Activated naive CD4-positive, alpha-beta T cell treated with anti-CD3 and anti-CD28 coated beads for 36 hours (primary cell): ENCODE measurements at regions of chr1 and their contacts with region 1.

Region 1: DNA sequence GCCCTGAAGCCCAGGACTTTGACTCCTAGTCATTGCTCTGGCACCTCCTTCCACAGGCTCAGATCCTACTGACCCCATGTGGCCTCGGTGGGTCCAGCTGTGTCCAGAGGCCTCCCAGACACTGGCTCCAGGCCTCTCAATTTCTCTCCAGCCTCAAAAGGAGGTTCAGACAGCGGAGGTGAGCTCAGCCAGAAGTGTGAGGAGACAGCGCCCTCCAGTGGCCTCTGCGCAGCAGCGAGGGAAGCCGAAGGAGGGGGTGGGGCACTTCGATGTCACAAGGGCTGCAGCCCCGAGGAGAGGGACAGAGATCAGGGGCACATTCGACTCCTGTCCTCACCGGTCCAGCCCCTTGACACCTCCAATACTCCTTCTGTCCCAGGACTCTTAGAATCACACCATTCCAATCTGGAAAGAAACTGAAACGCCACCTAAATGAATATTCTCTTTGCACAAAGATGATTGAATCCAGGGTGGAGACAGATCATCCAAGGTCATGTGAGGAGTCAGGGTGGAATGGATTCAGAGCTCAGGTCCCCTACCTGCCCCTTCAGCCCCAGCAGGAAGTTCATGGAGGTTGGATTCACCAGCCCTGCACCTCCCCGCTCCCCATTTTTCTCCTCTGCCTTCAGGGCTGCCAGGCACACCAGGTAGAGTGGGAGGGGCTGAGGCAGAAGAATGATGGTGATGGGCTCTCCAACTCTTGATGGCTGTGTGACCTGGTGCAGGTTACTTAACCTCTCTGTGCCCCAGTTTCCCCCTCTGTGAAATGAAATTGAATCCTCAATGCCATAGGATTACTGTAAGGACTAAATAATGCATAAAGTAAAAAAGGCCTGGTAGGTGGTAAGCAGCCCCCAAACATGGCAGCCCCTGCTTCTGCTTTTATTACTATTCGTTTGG is 34.8 kb upstream of the ZBTB40 start:
- DNase-seq: peak; percentile 87
- H3K4me3 Mint-ChIP-seq: no peak overlapping the region
- H3K27ac Mint-ChIP-seq: no peak overlapping the region
- H3K4me1 Mint-ChIP-seq: no peaks in the 10 kb centered on the region
- H3K27me3 Mint-ChIP-seq: peaks cover 34% of the 10 kb centered on the region

Region 2: GRCh38 chr1:22105611-22106207 is 311.1 kb before region 1 on chr1:
- CTCF ChIA-PET with region 1: no interaction called
- intact Hi-C with region 1: loop called (anchors 1 kb)
- DNase-seq: peak; percentile 50
- H3K4me3 Mint-ChIP-seq: no peak overlapping the region
- H3K27ac Mint-ChIP-seq: peak overlapping the region; percentile 74
- H3K4me1 Mint-ChIP-seq: peaks cover 53% of the 10 kb centered on the region
- H3K27me3 Mint-ChIP-seq: no peaks in the 10 kb centered on the region

Region 3: GRCh38 chr1:22131875-22132486 is 284.8 kb before region 1 on chr1:
- CTCF ChIA-PET with region 1: interaction called, 17 read pairs
- intact Hi-C with region 1: loop called (anchors 1 kb)
- DNase-seq: peak; percentile 69
- H3K4me3 Mint-ChIP-seq: no peak overlapping the region
- H3K27ac Mint-ChIP-seq: no peak overlapping the region
- H3K4me1 Mint-ChIP-seq: no peaks in the 10 kb centered on the region
- H3K27me3 Mint-ChIP-seq: peaks cover 2% of the 10 kb centered on the region

Region 4: DNA sequence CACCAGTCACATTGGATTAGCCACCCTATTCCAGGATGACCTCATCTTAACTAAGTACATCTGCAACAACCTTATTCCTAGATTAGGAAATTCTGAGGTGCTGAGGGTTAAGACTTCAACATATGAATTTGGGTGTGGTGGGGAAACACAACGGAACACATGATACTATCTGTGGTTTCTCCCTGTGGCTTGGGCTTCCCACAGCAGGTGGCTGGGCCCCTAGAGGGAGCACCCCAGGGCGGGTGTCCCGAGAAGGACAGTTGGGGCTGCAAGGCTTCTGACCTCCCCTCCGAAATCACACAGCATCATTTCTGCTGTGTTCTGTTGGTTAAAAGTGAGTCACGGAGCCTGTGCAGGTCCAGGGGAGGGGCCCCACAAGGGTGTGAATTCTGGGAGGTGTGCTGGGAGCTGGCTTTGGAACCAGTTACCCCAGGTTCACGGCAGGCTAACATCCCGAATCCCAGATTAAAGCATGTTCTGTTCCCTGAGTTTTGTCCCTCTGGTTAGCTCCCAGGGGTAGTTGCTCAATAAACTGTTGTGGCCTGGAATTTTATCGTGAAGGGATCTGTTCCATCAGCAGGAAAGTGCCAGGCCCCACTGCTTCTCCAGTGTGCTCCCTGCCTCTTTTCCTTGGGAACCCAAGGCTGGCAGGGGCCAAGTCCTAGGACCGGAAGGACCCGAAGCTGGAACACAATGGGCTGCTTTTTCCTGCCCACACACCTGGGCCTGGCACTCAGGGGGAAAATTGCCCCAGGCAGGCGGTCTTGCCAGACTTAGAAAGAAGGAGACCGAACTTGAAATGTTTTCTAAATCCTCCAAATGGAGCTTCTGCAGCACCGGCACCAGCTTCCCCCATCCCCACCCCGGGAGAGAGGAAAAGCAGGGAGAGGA is 119.9 kb before region 1 on chr1:
- CTCF ChIA-PET with region 1: interaction called, 3 read pairs
- intact Hi-C with region 1: loop called (anchors 10 kb)
- DNase-seq: no peak
- H3K4me3 Mint-ChIP-seq: no peak overlapping the region
- H3K27ac Mint-ChIP-seq: no peak overlapping the region
- H3K4me1 Mint-ChIP-seq: no peaks in the 10 kb centered on the region
- H3K27me3 Mint-ChIP-seq: peaks cover 38% of the 10 kb centered on the region

Region 5: GRCh38 chr1:22641906-22642636 is 225.3 kb after region 1 on chr1:
- CTCF ChIA-PET with region 1: interaction called, 15 read pairs
- intact Hi-C with region 1: loop called (anchors 1 kb)
- DNase-seq: peak; percentile 78
- H3K4me3 Mint-ChIP-seq: no peak overlapping the region
- H3K27ac Mint-ChIP-seq: no peak overlapping the region
- H3K4me1 Mint-ChIP-seq: no peaks in the 10 kb centered on the region
- H3K27me3 Mint-ChIP-seq: peaks cover 5% of the 10 kb centered on the region

Region 6: DNA sequence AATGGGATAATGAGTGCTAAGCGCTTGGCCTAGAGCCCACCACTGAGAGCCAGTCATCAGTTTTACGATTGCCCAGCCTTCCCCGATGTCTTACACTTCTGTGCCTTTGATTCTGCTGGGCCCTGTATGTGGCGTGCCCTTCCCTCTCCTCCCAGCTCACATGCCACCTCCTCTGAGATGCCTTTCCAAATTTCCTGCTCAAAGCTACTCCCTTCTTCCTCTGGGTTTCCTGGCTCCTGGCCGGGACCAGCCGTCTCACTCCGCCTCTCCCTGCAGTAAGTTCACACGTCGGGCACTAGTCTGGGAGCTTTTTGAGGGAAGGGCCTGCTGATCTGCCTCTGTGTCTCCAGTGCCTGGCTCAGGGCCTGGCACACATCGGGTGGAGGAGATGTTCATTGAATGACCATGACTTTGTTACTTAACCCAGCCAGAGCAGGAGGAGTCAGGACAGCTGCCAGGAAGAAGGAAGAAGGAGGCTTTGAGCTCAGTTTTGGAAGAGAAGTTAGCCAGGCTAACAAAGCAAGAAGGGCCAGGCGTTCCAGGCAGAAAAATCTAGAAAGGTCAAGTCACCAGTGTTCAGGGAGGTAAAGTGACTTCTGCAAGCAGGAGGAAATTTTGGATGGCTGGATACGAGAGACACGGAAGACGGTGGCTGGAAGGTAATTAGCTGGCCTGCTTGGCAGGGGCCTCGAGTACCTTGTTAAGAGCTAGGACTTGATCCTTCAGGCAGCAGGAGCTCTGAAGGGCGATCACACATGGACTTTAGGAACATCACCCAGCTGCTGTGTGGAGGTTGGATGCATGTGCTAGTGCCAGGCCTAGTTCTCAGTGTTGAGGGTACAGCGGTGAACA is 357.4 kb after region 1 on chr1:
- CTCF ChIA-PET with region 1: no interaction called
- intact Hi-C with region 1: no loop called
- DNase-seq: no peak
- H3K4me3 Mint-ChIP-seq: no peak overlapping the region
- H3K27ac Mint-ChIP-seq: no peak overlapping the region
- H3K4me1 Mint-ChIP-seq: no peaks in the 10 kb centered on the region
- H3K27me3 Mint-ChIP-seq: peaks cover 7% of the 10 kb centered on the region

Region 7: DNA sequence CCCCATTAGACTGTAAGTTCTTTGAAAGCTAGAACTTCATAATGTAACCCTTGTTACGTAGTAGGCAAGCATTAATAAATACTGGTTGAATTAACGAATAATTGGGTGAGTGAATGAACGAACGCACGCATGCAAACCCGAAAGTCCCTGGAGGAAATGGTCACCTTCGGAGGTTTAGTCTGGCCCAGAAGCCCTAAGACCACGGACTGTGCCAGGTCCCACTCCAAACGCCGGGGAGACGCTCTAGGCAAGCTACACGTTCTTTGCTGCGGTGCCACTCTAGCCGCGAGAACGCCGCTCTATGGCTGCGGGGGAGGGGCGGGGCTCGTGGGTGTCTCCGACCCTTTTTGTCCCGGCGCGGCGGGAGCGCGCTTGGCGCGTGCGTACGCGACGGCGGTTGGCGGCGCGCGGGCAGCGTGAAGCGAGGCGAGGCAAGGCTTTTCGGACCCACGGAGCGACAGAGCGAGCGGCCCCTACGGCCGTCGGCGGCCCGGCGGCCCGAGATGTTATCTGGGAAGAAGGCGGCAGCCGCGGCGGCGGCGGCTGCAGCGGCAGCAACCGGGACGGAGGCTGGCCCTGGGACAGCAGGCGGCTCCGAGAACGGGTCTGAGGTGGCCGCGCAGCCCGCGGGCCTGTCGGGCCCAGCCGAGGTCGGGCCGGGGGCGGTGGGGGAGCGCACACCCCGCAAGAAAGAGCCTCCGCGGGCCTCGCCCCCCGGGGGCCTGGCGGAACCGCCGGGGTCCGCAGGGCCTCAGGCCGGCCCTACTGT is 602.5 kb after region 1 on chr1 and contains the start of gene KDM1A:
- CTCF ChIA-PET with region 1: no interaction called
- intact Hi-C with region 1: no loop called
- DNase-seq: peak; percentile 97
- H3K4me3 Mint-ChIP-seq: peak within 1 kb of the TSS; percentile 93
- H3K27ac Mint-ChIP-seq: peak within 1 kb of the TSS; percentile 83
- H3K4me1 Mint-ChIP-seq: peaks cover 42% of the 10 kb centered on the region
- H3K27me3 Mint-ChIP-seq: no peaks in the 10 kb centered on the region
- total RNA-seq, gene KDM1A: 59.7 to 62.6 TPM